GM13977 (cell line): ENCODE measurements at regions of chr5 and their contacts with region 1.

Region 1: GRCh38 chr5:101045689-101046088 is 142.6 kb upstream of the ST8SIA4 start:
- DNase-seq: peak; percentile 27
- CTCF ChIP-seq: peak; percentile 38

Region 2: DNA sequence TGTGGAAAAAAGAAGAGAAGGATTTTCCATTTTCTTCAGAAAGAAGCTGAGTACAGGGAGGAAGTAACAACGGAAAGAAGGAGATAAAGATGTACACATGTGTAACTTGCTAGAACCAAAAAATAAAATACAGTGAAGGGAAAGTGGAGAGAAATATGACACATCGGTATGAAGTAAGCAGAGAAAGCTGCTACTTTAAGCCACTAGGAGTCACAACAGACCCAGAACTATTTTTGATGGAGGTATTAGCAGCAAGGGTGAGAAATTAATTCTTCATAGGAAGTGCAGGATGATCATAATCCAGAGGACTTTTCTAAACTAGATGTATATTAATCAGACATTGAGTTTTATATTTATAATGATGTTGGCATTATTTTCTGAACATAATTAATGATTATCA is 422.0 kb before region 1 on chr5:
- in situ Hi-C with region 1: loop called (anchors 25 kb)
- DNase-seq: peak; percentile 19
- CTCF ChIP-seq: peak; percentile 65